Naive thymus-derived CD4-positive, alpha-beta T cell (primary cell): ENCODE measurements at regions of chr13 and their contacts with region 1.

Region 1: DNA sequence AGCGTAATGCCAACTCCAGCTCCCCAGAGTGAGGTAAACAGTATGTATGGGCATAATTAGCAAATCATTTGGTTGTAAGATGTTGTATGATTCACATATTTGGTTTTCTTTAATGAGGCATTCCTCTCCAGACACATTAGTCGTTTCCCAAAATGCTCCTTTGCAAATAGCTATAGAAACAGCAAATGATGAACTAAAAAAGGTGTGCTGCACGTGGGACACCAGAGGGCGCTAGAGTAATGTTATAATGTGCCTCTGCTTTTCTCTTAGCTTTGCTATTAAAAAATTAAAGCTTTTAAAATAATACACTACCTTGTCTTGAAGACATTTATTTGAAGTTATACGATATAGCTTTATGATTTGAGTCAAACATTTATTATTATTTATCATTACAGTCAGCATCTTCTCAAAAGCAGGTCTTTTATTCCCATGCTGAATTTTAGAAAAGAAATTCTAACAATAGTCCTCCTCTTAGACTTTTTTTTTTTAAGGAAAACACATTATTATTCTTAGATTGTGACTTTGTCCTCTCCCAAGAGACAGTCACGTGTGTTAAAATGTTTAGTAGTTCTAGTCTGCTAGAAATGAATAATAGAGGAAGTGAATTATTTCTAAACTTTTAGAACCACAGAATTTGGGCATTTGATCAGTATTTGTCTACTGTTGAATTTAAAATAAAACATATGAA is 121.6 kb upstream of the FRY start:
- DNase-seq: peak; percentile 9 to 59 (median 45)
- ATAC-seq: peak; percentile 76
- H3K4me3 ChIP-seq: no peak overlapping the region
- H3K4me3 Mint-ChIP-seq: no peak overlapping the region
- H3K27ac ChIP-seq: no peak overlapping the region
- H3K27ac Mint-ChIP-seq: no peak overlapping the region
- H3K4me1 ChIP-seq: no peaks in the 10 kb centered on the region
- H3K4me1 Mint-ChIP-seq: peaks cover 0 to 24% (median 0%) of the 10 kb centered on the region in 7 donors
- H3K27me3 ChIP-seq: no peaks in the 10 kb centered on the region
- H3K27me3 Mint-ChIP-seq: peaks cover 0 to 52% (median 9%) of the 10 kb centered on the region in 5 donors

Region 2: GRCh38 chr13:31595563-31595962 is 314.4 kb before region 1 on chr13:
- CTCF ChIA-PET with region 1: no interaction called
- POLR2A ChIA-PET with region 1: no interaction called
- intact Hi-C with region 1: no loop called
- DNase-seq: no peak
- ATAC-seq: no peak
- H3K4me3 ChIP-seq: no peak overlapping the region
- H3K4me3 Mint-ChIP-seq: no peak overlapping the region
- H3K27ac ChIP-seq: no peak overlapping the region
- H3K27ac Mint-ChIP-seq: no peak overlapping the region
- H3K4me1 ChIP-seq: no peaks in the 10 kb centered on the region
- H3K4me1 Mint-ChIP-seq: no peaks in the 10 kb centered on the region
- H3K27me3 ChIP-seq: no peaks in the 10 kb centered on the region
- H3K27me3 Mint-ChIP-seq: peaks cover 0 to 5% (median 0%) of the 10 kb centered on the region in 5 donors

Region 3: DNA sequence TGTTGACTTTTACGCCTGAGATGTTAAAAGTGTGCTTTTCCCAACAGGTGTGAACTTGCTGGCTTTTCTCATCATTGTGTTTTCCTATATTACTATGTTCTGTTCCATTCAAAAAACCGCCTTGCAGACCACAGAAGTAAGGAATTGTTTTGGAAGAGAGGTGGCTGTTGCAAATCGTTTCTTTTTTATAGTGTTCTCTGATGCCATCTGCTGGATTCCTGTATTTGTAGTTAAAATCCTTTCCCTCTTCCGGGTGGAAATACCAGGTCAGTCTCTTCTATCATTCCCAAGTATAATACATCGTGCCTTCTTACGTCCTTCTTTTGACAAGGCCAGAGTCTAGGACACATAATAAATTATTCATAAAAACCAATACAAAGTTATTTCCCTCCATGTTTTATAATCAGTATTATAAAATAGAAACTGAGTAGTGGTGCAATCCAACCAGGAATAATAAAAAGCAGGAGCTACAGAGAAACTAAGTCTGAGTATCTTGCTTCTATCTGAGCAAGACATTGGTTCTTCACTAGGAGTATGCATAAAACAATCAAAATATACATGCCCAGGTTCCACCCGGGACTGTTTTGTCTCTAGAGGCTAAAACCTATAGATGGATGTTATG is 112.7 kb before region 1 on chr13:
- CTCF ChIA-PET with region 1: no interaction called
- POLR2A ChIA-PET with region 1: no interaction called
- intact Hi-C with region 1: no loop called
- DNase-seq: no peak
- ATAC-seq: no peak
- H3K4me3 ChIP-seq: no peak overlapping the region
- H3K4me3 Mint-ChIP-seq: no peak overlapping the region
- H3K27ac ChIP-seq: no peak overlapping the region
- H3K27ac Mint-ChIP-seq: no peak overlapping the region
- H3K4me1 ChIP-seq: no peaks in the 10 kb centered on the region
- H3K4me1 Mint-ChIP-seq: peaks cover 0 to 9% (median 0%) of the 10 kb centered on the region in 7 donors
- H3K27me3 ChIP-seq: no peaks in the 10 kb centered on the region
- H3K27me3 Mint-ChIP-seq: peaks cover 0 to 27% (median 10%) of the 10 kb centered on the region in 5 donors

Region 4: DNA sequence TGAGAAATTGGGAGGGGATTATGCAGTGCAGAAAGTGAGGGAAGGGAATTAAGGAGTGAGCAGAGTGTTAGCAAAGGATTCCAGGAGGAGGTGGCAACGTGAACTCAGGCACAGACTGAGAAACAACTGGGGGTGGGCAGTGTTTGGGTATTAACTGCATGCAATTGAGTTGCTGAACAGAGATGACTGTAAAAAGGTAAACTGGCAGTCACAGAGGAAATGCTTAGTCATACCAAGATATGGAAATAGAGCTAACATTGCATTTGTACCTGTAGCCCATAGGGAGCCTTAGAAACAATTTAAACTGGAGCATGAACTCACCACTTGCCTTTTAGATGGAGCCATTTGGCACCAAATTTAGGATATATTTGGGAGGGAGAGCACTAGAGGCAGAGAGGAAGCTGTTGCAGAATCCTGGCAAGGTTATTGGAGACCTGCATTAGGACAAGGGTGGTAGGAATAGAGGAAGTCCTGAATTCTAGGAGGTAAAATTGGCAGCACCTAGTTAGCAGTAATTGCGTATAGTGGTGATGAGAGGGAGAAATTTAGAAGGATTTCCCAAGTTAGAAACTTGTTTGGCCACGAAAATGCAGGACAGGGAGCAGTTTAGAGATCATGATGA is 21.0 kb after region 1 on chr13:
- CTCF ChIA-PET with region 1: no interaction called
- POLR2A ChIA-PET with region 1: no interaction called
- intact Hi-C with region 1: loop called in 1 of 2 experiments (anchors 2 kb)
- DNase-seq: peak in 1 of 9 donors; percentile 24
- ATAC-seq: no peak
- H3K4me3 ChIP-seq: no peak overlapping the region
- H3K4me3 Mint-ChIP-seq: no peak overlapping the region
- H3K27ac ChIP-seq: no peak overlapping the region
- H3K27ac Mint-ChIP-seq: no peak overlapping the region
- H3K4me1 ChIP-seq: peaks cover 0 to 4% of the 10 kb centered on the region in 2 donors
- H3K4me1 Mint-ChIP-seq: peaks cover 0 to 22% (median 0%) of the 10 kb centered on the region in 7 donors
- H3K27me3 ChIP-seq: no peaks in the 10 kb centered on the region
- H3K27me3 Mint-ChIP-seq: peaks cover 0 to 19% (median 6%) of the 10 kb centered on the region in 5 donors

Region 5: DNA sequence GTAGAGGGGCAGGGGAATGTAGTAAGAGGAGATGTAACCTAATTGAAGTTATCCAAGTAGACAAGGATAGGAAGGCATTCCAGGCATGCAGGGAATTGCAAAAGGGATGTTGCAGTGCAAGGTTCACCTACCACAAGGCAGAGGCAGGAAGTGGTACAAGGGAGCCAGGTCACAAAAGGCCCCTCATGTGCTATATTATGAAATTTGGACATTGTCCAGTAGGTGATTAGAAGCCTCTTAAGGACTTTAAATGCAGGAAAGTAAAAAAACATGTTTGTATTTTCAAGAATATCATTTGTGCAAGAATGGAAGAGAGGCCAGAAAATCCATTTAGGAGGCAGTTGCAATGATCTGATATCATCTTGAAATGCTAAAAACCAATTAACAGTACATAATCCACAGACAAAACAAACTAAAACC is 233.0 kb after region 1 on chr13:
- CTCF ChIA-PET with region 1: no interaction called
- POLR2A ChIA-PET with region 1: no interaction called
- intact Hi-C with region 1: loop called in 1 of 2 experiments (anchors 10 kb)
- DNase-seq: no peak
- ATAC-seq: no peak
- H3K4me3 ChIP-seq: no peak overlapping the region
- H3K4me3 Mint-ChIP-seq: no peak overlapping the region
- H3K27ac ChIP-seq: no peak overlapping the region
- H3K27ac Mint-ChIP-seq: no peak overlapping the region
- H3K4me1 ChIP-seq: no peaks in the 10 kb centered on the region
- H3K4me1 Mint-ChIP-seq: peaks cover 0 to 2% (median 0%) of the 10 kb centered on the region in 7 donors
- H3K27me3 ChIP-seq: no peaks in the 10 kb centered on the region
- H3K27me3 Mint-ChIP-seq: peaks cover 0 to 4% (median 0%) of the 10 kb centered on the region in 5 donors

Region 6: GRCh38 chr13:32310134-32310706 is 400.2 kb after region 1 on chr13:
- CTCF ChIA-PET with region 1: interaction called, 4 read pairs
- POLR2A ChIA-PET with region 1: no interaction called
- intact Hi-C with region 1: loop called (anchors 1 kb)
- DNase-seq: peak in 7 of 9 donors; percentile 16 to 64 (median 51)
- ATAC-seq: peak; percentile 58
- H3K4me3 ChIP-seq: no peak overlapping the region
- H3K4me3 Mint-ChIP-seq: peak overlapping the region in 7 of 10 donors; percentile 10 to 61 (median 28)
- H3K27ac ChIP-seq: no peak overlapping the region
- H3K27ac Mint-ChIP-seq: peak overlapping the region in 1 of 9 donors; percentile 18
- H3K4me1 ChIP-seq: peaks cover 5 to 7% of the 10 kb centered on the region in 2 donors
- H3K4me1 Mint-ChIP-seq: peaks cover 13 to 28% (median 14%) of the 10 kb centered on the region in 7 donors
- H3K27me3 ChIP-seq: no peaks in the 10 kb centered on the region
- H3K27me3 Mint-ChIP-seq: peaks cover 0 to 2% (median 0%) of the 10 kb centered on the region in 5 donors

Region 7: DNA sequence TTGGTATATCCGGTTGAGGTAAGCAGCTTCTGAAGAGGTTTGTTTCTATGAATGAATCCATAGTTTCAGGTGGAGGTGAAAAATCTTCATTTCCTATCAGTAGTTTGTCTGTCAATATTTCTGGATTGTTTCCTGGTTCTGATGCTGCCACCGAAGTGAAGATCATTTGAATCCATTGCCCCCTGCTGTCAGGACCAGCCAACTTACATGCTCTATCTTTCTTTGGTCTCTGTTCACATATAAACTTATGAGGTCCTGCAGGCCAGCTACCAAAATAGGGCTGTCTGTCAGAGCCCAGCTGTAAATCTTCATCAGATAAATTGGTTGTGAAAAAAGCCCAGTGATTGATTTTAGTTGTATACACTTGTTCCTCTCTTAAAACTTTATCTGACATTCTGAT is 533.1 kb after region 1 on chr13:
- CTCF ChIA-PET with region 1: no interaction called
- POLR2A ChIA-PET with region 1: no interaction called
- intact Hi-C with region 1: loop called in 1 of 2 experiments (anchors 1 kb)
- DNase-seq: peak in 7 of 9 donors; percentile 12 to 59 (median 37)
- ATAC-seq: peak; percentile 79
- H3K4me3 ChIP-seq: no peak overlapping the region
- H3K4me3 Mint-ChIP-seq: no peak overlapping the region
- H3K27ac ChIP-seq: no peak overlapping the region
- H3K27ac Mint-ChIP-seq: peak overlapping the region in 3 of 9 donors; percentile 2 to 25 (median 6)
- H3K4me1 ChIP-seq: no peaks in the 10 kb centered on the region
- H3K4me1 Mint-ChIP-seq: peaks cover 0 to 10% (median 3%) of the 10 kb centered on the region in 7 donors
- H3K27me3 ChIP-seq: no peaks in the 10 kb centered on the region
- H3K27me3 Mint-ChIP-seq: no peaks in the 10 kb centered on the region

Region 8: DNA sequence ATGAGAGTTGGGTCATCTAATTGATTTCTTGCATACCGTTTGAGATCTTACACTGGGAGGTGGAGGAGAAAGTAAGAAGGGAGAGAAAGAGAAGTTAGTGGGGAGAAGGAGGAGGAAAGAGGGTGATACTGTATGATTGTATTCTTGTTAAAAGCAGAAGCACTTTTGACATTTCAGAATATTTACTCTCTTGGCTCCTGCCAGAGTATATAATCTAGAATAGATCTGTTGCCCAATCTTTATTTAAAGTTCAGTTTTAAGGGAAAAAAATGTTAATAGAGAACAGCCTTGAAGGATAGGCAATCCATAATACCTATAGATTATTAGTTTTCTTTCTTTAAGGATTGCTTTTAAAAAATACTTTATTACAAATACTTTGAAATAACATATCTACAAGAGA is 717.8 kb after region 1 on chr13:
- CTCF ChIA-PET with region 1: no interaction called
- POLR2A ChIA-PET with region 1: no interaction called
- intact Hi-C with region 1: loop called in 1 of 2 experiments (anchors 5 kb)
- DNase-seq: no peak
- ATAC-seq: no peak
- H3K4me3 ChIP-seq: no peak overlapping the region
- H3K4me3 Mint-ChIP-seq: no peak overlapping the region
- H3K27ac ChIP-seq: no peak overlapping the region
- H3K27ac Mint-ChIP-seq: no peak overlapping the region
- H3K4me1 ChIP-seq: no peaks in the 10 kb centered on the region
- H3K4me1 Mint-ChIP-seq: peaks cover 26 to 81% (median 60%) of the 10 kb centered on the region in 7 donors
- H3K27me3 ChIP-seq: no peaks in the 10 kb centered on the region
- H3K27me3 Mint-ChIP-seq: no peaks in the 10 kb centered on the region